GM10248 (cell line): ENCODE measurements at regions of chr3 and their contacts with region 1.

Region 1: GRCh38 chr3:182920515-182921084 is 59.7 kb downstream of the DCUN1D1 start:
- DNase-seq: no peak
- CTCF ChIP-seq: no peak

Region 2: DNA sequence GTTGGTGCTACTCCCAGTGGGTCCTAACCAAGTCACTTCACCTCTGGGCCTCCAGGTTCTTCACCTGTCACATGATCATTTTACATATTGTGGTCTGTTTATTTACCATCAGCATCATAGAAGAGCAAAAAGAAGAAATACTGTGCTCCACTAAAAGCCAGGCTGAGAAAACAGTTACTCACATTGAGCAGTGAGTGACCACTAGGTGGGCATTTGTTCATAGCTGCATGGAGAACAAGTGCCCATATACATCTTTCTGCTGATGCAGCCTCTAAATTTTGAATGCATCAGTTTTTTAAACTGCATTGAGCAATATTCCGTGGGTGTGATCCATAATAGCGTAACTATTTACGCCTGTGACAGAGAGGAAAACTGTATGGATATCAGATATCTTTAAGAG is 16.4 kb before region 1 on chr3:
- CTCF ChIA-PET with region 1: interaction called, 34 read pairs
- POLR2A ChIA-PET with region 1: no interaction called
- DNase-seq: no peak
- CTCF ChIP-seq: no peak

Region 3: DNA sequence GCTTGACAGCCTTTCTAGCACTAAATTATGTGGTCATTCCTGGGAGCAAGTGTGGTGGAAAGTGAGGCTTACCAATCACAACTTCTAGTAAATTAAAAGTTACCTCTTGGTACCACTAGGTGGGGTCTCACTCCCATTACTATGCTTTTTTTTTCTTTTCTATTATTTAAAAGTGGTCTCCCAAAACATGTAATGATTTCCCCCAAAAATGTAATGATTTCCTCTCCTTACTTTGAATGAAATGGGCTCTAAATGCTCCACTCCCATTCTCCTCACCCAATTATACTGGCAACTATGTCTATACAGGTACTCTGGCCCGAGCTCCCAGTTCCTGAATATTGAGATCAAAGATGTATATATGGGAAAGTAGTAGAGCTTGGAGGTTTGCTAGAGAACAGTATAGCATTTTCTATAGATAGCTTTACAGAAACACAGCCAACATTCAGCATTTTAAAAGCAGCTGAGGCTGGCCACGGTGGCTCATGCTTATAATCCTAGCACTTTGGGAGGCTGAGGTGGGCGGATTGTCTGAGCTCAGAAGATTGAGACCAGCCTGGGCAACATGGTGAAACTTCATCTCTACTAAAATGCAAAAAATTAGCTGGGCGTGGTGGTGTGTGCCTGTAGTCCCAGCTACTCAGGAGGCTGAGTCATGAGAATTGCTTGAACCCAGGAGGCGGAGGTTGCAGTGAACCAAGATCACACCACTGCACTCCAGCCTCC is 11.1 kb before region 1 on chr3:
- CTCF ChIA-PET with region 1: interaction called, 34 read pairs
- POLR2A ChIA-PET with region 1: no interaction called
- DNase-seq: no peak
- CTCF ChIP-seq: peak; percentile 12